ENCODE measurements at regions of chr16 and their contacts with region 1.

Region 1: GRCh38 chr16:48632137-48632774 is 22.3 kb upstream of the N4BP1 start:
- DNase-seq: no peak
- H3K4me3 ChIP-seq: no peak overlapping the region
- CTCF ChIP-seq: no peak

Region 2: DNA sequence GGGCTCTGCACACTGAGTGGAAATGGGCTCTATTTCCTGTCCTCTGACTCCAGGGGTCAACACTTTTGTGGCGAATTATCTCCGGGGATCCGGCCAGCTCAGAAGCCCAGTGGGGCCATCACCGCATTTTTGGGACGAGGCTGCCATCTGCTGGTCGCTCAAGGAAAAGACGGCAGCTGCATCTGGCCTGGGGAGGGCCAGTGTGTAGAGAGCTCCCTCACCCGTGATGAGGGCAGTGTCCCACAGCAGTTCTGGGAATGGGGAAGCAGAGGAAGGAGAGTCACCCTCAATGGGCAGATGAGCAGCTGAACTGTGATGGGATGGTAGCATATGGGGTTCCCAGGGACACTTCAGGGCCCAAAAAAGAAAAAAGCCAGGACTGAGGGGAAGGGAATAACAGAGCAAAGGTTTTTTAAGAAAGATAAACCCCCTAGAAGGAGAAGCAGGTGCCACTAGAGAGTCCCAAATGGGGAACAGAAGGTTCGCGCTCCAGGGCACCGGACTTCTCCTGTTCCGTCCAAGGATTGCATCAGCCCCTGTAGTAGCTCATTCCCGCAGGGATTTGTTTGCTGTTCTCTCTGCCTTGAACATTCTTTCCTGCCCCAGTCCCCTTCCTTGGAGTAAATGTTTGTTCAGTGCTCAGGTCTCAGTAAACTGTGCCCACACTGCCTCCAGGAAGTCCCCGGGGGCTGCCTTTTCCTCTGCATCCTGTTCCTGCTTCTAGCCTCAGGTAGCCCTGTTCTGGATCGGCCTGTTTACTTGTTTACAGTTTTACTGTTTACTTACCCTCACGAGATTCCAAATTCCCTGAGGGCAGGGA is 467.1 kb before region 1 on chr16:
- CTCF ChIA-PET with region 1: interaction called, 16 read pairs
- POLR2A ChIA-PET with region 1: no interaction called
- DNase-seq: no peak
- H3K4me3 ChIP-seq: no peak overlapping the region
- CTCF ChIP-seq: peak; percentile 92

Region 3: DNA sequence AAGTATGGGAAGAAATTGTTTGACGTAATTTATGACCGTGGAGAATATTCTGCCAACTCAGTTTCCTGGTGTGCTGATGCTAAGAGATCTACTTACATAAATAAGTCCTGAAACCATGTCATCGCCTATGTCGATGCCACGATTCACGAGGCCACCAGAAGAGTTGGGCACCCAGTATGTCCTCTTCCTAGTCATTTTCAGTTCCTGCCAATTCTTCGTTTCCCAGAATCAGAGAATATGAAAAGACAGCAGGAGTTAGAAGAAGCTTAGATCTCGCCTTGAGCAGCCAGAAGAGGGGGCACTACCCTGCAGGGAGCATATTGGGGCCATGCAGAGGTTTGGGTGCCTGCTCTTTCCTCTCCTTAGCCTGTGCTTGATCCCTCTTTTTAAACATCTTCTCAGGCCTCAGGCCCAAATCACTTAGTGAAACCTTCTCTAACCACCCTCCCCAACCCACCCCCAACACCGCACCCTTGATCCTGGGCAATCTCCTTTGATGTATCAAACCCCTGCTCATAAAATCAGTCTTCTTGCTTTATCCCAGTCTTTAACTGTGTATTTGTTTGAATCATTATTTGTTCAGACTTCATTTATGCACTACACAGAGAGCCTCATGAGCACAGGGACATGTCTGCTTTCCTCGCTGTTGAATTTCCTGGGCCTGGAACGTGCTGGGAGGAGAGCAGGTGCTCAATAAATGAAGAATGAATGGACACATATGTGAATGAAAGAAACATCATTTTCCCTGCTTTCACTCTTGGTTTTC is 400.3 kb before region 1 on chr16:
- CTCF ChIA-PET with region 1: interaction called, 51 read pairs
- POLR2A ChIA-PET with region 1: no interaction called
- DNase-seq: peak; percentile 3
- H3K4me3 ChIP-seq: no peak overlapping the region
- CTCF ChIP-seq: peak; percentile 68

Region 4: DNA sequence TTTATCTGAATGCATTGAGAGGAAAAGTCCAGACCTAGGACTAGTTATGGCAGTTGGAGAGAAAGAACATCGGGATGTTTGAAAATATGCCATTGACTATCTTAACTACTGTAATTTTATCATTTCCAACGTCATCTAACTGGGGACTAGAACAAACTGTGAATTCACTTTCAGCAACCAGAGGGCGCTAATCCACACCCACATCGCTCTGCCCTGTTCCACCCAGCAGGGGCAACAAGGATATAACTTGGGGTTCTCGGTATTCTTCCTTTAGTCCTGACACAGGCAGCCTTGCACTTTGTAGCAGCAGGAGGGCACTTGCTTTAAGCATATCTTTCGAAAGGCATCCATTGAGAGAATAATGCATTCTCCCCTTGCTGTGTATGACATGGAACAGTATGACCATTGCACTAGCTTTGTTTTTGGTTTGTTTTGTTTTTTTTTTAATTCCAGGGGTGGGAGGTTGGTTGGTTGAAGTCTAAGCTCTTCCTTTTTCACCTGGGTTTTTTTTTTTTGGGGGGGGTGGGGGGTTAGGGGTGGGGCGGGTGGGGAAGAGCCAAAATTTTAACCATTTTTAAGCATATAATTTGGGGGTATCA is 278.6 kb before region 1 on chr16:
- CTCF ChIA-PET with region 1: interaction called, 77 read pairs
- POLR2A ChIA-PET with region 1: no interaction called
- DNase-seq: no peak
- H3K4me3 ChIP-seq: no peak overlapping the region
- CTCF ChIP-seq: peak; percentile 83

Region 5: DNA sequence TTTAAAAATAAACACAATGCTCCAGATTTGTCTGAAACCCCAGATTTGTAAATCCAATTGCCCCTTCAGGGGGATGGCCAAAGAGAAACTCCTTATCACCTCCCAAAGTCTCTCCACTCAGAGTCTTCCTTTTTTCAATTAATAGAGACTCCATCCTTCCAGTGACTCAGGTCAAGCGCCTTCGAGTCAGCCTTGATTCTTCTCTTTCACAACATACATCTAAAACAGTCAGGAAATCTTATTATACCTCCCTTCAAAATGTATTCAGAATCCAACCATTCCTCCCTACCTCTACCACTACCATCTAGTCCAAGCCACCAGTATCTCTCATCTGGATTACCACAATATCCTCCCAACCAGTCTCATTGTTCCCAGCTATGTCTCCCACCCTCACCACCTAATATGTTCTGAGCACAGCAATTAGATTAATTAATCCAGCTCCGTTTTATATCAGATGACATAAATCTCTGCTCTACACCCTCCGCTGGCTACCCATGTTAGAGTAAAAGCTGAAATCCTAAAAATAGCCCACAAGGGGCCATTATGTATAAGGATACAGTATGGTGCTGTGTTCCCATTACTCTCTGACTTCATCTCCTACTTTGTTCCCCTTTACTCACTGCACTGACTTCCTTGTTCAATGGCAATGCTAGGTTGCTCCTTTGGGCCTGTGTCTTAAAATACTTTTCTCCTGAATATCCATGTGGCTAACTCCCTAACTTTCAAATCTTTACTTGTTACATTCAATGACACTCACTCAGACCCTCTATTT is 258.8 kb before region 1 on chr16:
- CTCF ChIA-PET with region 1: interaction called, 14 read pairs
- POLR2A ChIA-PET with region 1: no interaction called
- DNase-seq: no peak
- H3K4me3 ChIP-seq: no peak overlapping the region
- CTCF ChIP-seq: no peak

Region 6: GRCh38 chr16:48617711-48618148 is 14.5 kb before region 1 on chr16:
- CTCF ChIA-PET with region 1: interaction called, 28 read pairs
- POLR2A ChIA-PET with region 1: no interaction called
- DNase-seq: peak; percentile 50
- H3K4me3 ChIP-seq: no peak overlapping the region
- CTCF ChIP-seq: no peak

Measured in AG04449 (cell line).